Adrenal gland (tissue), 19 donors: ENCODE measurements at regions of chr19 and their contacts with region 1.

Region 1: GRCh38 chr19:55516878-55517620 is 19.9 kb downstream of the SBK2 start:
- DNase-seq: peak; percentile 92 to 97 (median 94)
- H3K4me3 ChIP-seq: peak overlapping the region in 2 of 4 donors; percentile 37 to 63
- H3K27ac ChIP-seq: peak overlapping the region in 4 of 5 donors; percentile 55 to 82 (median 64)
- H3K4me1 ChIP-seq: no peaks in the 10 kb centered on the region
- H3K27me3 ChIP-seq: no peaks in the 10 kb centered on the region
- CTCF ChIP-seq: peak; percentile 72 to 96 (median 92)
- POLR2A ChIP-seq: peak in 1 of 2 donors; percentile 32

Region 2: GRCh38 chr19:55605207-55605636 is 88.2 kb after region 1 on chr19:
- intact Hi-C with region 1: no loop called
- DNase-seq: peak; percentile 97 to 98 (median 98)
- H3K4me3 ChIP-seq: peak overlapping the region in 3 of 4 donors; percentile 62 to 91 (median 71)
- H3K27ac ChIP-seq: peak overlapping the region; percentile 79 to 94 (median 91)
- H3K4me1 ChIP-seq: peaks cover 13 to 27% of the 10 kb centered on the region in 2 donors
- H3K27me3 ChIP-seq: no peaks in the 10 kb centered on the region
- CTCF ChIP-seq: no peak
- POLR2A ChIP-seq: peak in 1 of 2 donors; percentile 26

Region 3: GRCh38 chr19:55624109-55625003 is 107.3 kb after region 1 on chr19 and contains the start of gene ZNF784:
- intact Hi-C with region 1: loop called in 1 of 2 experiments (anchors 2 kb)
- DNase-seq: peak; percentile 91 to 95 (median 94)
- H3K4me3 ChIP-seq: peak within 1 kb of the TSS in 3 of 4 donors; percentile 61 to 97 (median 64)
- H3K27ac ChIP-seq: peak within 1 kb of the TSS; percentile 91 to 98 (median 95)
- H3K4me1 ChIP-seq: peaks cover 0 to 25% of the 10 kb centered on the region in 2 donors
- H3K27me3 ChIP-seq: no peaks in the 10 kb centered on the region
- CTCF ChIP-seq: no peak
- POLR2A ChIP-seq: peak in 1 of 2 donors; percentile 39
- total RNA-seq, gene ZNF784: 5.4 to 16.3 (median 9.7) TPM

Region 4: GRCh38 chr19:55632463-55632834 is 115.4 kb after region 1 on chr19:
- intact Hi-C with region 1: loop called (anchors 2 to 5 kb)
- DNase-seq: peak; percentile 92 to 98 (median 95)
- H3K4me3 ChIP-seq: no peak overlapping the region
- H3K27ac ChIP-seq: peak overlapping the region in 1 of 5 donors; percentile 59
- H3K4me1 ChIP-seq: peaks cover 18 to 20% of the 10 kb centered on the region in 2 donors
- H3K27me3 ChIP-seq: no peaks in the 10 kb centered on the region
- CTCF ChIP-seq: peak; percentile 89 to 95 (median 92)
- POLR2A ChIP-seq: no peak

Region 5: DNA sequence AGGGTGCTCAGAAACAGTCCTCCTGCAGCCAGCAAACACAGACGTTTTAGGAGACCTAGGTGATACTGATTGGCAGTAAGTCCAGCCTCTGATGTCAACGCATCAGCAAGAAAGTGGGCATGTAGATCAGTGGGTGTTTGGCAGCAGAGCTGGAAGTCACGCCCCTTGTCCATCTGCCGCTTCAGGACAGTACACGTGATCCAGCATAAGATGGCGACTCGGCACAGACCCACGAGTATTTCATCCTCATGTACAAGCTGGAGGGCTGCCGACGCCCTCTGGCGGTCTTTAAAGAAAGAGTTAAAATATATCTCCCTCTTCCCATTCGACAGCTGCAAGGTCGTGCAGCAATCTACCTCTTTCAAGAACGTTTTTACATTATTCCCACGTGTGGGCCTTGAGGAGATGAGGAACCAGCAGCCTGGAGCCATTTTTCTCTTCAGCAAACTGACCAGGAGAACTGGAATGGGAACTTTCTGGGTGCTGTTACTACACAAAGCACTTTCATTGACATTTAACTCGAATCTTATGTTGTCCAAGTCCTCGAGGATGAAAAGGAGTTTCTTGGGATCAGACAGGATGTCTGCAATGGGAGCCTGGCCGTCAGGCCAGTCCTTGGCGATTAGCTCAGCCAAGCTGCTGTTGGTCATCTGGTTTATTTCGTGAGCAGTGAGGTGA is 292.5 kb after region 1 on chr19:
- intact Hi-C with region 1: loop called in 1 of 2 experiments (anchors 10 kb)
- DNase-seq: peak; percentile 32 to 80 (median 56)
- H3K4me3 ChIP-seq: no peak overlapping the region
- H3K27ac ChIP-seq: no peak overlapping the region
- H3K4me1 ChIP-seq: no peaks in the 10 kb centered on the region
- H3K27me3 ChIP-seq: no peaks in the 10 kb centered on the region
- CTCF ChIP-seq: peak; percentile 15 to 50 (median 38)
- POLR2A ChIP-seq: no peak